ENCODE measurements at regions of chr17 and their contacts with region 1.

Region 1: GRCh38 chr17:35947156-35947585 is 3.7 kb upstream of the LYZL6 start:
- H3K4me3 ChIP-seq: no peak overlapping the region
- H3K27ac ChIP-seq: no peak overlapping the region
- H3K4me1 ChIP-seq: peaks cover 6% of the 10 kb centered on the region; the same call in 1 of the 2 replicates
- CTCF ChIP-seq: peak; percentile 67; the same call in 1 of the 2 replicates

Region 2: GRCh38 chr17:35747540-35748017 is 199.6 kb before region 1 on chr17:
- CTCF ChIA-PET with region 1: no interaction called
- POLR2A ChIA-PET with region 1: no interaction called
- H3K4me3 ChIP-seq: no peak overlapping the region
- H3K27ac ChIP-seq: no peak overlapping the region
- H3K4me1 ChIP-seq: no peaks in the 10 kb centered on the region
- CTCF ChIP-seq: peak; percentile 97

Region 3: GRCh38 chr17:35930211-35931065 is 16.7 kb before region 1 on chr17 and contains the start of gene RDM1:
- CTCF ChIA-PET with region 1: interaction called, 12 read pairs
- POLR2A ChIA-PET with region 1: interaction called, 4 read pairs
- H3K4me3 ChIP-seq: peak within 1 kb of the TSS; percentile 73
- H3K27ac ChIP-seq: peak within 1 kb of the TSS; percentile 0; the same call in 1 of the 2 replicates
- H3K4me1 ChIP-seq: peaks cover 7% of the 10 kb centered on the region
- CTCF ChIP-seq: no peak

Measured in HEK293 (cell line).